ENCODE measurements at regions of chr4 and their contacts with region 1.

Region 1: GRCh38 chr4:139295206-139295941 is 5.9 kb upstream of the NAA15 start:
- DNase-seq: peak; percentile 98
- ATAC-seq: peak; percentile 97
- H3K4me3 Mint-ChIP-seq: peak overlapping the region; percentile 91
- H3K27ac Mint-ChIP-seq: peak overlapping the region; percentile 96
- H3K4me1 Mint-ChIP-seq: peaks cover 41% of the 10 kb centered on the region
- H3K27me3 Mint-ChIP-seq: no peaks in the 10 kb centered on the region

Region 2: DNA sequence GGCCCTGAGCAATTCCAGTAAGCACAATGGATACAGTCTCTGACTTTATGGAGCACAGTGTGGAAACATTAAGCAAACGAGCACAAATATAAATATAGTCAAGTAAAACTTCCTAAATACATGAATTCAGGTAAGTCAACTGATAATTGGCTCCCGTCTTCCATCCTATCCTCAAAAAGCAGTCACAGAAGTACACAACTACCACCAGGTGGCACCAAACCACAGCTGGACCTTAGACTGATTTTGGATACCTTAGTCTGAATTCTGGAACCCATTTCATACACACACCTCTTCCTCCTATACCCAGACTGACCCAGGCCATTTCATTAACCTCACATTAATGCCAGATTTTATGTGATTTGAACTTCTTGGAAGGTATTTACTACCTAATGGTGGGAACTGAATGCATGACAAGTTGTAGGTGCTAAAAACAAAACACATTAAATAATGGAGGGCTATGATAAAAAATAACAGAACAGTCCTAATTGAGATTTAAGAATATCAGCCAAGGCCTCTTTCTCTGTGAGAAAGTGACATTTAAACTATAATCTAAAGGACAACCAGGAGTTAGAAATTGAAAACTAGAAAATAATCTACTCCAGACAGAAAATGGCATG is 195.9 kb before region 1 on chr4:
- CTCF ChIA-PET with region 1: interaction called, 44 read pairs
- DNase-seq: peak; percentile 81
- ATAC-seq: peak; percentile 81
- H3K4me3 Mint-ChIP-seq: no peak overlapping the region
- H3K27ac Mint-ChIP-seq: no peak overlapping the region
- H3K4me1 Mint-ChIP-seq: peaks cover 4% of the 10 kb centered on the region
- H3K27me3 Mint-ChIP-seq: no peaks in the 10 kb centered on the region

Region 3: DNA sequence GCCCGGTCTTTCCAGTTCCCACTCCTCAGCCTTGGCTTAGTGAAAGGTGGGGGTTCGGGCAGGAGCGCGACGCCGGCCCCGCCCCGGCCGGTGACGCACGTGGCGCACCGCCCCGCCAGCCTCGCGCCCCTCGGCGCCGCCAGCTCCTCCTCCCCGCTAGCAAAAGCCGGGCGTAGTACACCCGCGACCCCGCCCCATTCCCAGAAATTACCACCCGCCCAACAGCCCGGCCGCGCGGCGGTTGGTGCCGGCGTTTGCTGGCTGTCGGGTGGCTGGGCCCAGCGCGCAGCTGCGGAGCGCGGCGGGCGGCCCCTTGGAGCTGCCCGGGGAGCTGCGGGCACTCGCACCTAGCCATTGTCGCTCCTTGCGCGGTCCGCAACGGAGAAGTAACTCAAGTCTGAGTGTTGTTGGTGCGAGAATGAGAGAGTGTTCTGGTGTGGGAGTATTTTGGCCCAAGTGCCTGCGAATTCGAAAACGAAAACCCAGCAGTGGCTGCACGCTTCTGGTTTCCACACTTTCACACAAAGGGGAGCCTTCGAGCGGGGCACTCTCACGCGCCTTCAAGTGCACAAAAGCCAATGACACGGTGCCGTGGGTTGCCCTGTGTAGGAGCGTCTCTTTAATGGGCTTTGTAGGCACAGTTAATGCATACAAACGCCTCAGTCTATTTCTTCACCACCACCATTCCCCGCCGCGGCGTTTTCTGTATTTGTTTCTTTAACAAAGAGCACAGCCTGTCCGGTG is 117.3 kb before region 1 on chr4:
- CTCF ChIA-PET with region 1: interaction called, 18 read pairs
- DNase-seq: peak; percentile 94
- ATAC-seq: peak; percentile 73
- H3K4me3 Mint-ChIP-seq: peak overlapping the region; percentile 75
- H3K27ac Mint-ChIP-seq: peak overlapping the region; percentile 86
- H3K4me1 Mint-ChIP-seq: peaks cover 20% of the 10 kb centered on the region
- H3K27me3 Mint-ChIP-seq: peaks cover 36% of the 10 kb centered on the region

Region 4: DNA sequence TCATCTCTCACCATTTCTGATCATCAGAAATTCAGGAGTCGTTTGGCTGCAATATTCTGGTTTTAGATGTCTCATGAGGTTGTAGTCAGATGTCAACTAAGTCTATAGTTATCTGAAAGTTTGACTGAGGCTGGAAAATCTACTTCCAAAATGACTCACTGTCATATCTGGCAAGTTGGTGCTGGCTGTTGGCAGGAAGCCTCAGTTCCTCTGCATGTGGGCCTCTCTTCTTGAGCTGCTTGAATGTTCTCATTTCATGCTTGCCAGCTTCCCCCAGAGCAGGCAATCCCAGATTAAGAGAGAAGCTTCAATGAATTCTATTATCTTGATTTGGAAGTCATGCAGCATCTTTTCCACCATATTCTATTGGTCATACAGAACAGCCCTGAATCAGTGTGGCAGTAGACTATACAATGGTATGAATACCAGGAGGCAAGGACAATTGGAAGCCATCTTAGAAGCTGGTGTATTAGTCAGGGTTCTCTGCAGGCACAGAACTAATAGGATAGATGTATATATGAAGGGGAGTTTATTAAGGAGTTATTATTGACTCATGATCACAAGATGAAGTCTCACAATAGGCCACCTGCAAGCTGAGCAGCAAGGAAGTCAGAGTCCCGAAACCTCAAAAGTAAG is 71.6 kb before region 1 on chr4:
- CTCF ChIA-PET with region 1: interaction called, 17 read pairs
- DNase-seq: peak; percentile 43
- ATAC-seq: peak; percentile 64
- H3K4me3 Mint-ChIP-seq: no peak overlapping the region
- H3K27ac Mint-ChIP-seq: no peak overlapping the region
- H3K4me1 Mint-ChIP-seq: peaks cover 17% of the 10 kb centered on the region
- H3K27me3 Mint-ChIP-seq: no peaks in the 10 kb centered on the region

Region 5: GRCh38 chr4:139229534-139230039 is 65.8 kb before region 1 on chr4:
- CTCF ChIA-PET with region 1: interaction called, 17 read pairs
- DNase-seq: no peak
- ATAC-seq: peak; percentile 72
- H3K4me3 Mint-ChIP-seq: no peak overlapping the region
- H3K27ac Mint-ChIP-seq: no peak overlapping the region
- H3K4me1 Mint-ChIP-seq: peaks cover 2% of the 10 kb centered on the region
- H3K27me3 Mint-ChIP-seq: no peaks in the 10 kb centered on the region

Region 6: DNA sequence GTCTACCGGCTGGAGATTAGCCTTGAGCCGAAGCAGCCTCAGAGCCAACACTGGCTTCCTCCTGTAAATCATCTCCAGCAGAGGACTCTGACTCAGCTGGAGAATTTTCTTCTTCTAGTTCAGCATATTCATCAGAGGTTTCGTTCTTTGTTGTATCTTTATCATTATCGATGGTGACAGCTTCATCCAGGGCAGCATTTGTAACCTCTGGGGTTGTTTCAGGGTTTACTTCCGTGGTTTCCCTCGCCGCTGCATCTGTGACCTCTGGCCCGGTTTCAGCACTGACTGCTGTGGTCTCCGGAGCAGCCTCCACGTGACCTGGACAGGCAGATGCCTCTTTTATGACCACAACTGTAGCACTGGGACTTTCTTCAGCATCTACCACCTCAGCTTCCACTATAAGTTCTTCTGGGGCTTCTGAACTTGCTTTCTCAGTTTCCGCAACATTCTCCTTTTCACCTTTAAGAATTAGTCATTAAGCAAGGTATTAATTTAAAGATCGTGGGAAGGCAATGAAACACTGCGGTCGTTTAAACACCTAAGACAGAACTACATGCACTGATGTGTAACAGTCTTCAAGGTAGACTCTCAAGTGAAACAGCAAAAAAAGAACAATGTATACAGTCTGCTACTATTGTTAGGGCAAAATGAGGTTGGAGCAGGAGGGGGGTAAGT is 28.7 kb before region 1 on chr4:
- CTCF ChIA-PET with region 1: interaction called, 14 read pairs
- DNase-seq: peak; percentile 94
- ATAC-seq: peak; percentile 96
- H3K4me3 Mint-ChIP-seq: peak overlapping the region; percentile 65
- H3K27ac Mint-ChIP-seq: peak overlapping the region; percentile 77
- H3K4me1 Mint-ChIP-seq: peaks cover 29% of the 10 kb centered on the region
- H3K27me3 Mint-ChIP-seq: peaks cover 18% of the 10 kb centered on the region

Measured in activated CD8-positive, alpha-beta memory T cell treated with anti-CD3 and anti-CD28 coated beads, Interleukin-2, amount 10 ng/mL, durations not matched to agents 7 days and 5 days (primary cell).